ENCODE measurements at regions of chr2 and their contacts with region 1.

Region 1: DNA sequence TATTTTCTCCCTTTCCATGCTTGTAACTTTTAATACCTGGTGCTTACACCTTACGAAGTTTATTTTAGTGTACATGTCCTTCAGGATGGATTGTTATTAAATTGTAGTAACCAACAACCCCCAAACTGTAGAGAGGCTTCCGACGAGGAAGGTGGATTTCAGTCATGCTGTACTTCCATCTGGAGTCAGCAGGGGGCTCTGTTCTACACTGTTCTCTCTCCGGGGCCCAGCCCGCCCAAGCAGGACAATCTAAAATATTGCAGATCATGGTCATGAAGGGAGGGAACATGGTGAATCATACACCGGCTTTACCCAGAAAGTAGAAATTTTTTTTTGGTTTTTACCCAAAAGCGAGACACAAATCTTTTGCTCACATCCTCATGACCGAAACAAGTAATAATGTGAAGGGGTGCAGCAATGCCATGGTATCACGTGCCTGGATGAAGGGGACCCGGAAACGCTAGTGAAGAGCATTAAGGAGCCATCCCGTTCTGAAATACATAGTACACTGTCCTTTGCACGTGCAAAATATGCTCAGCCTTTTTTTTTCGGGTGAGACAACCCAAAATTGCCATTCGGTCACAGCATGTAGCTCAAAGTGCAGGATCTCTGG is 884.8 kb downstream of the EPHA4 start:
- DNase-seq: peak; percentile 60
- ATAC-seq: peak; percentile 87
- H3K4me3 ChIP-seq: no peak overlapping the region
- H3K27ac ChIP-seq: no peak overlapping the region
- H3K4me1 ChIP-seq: no peaks in the 10 kb centered on the region
- H3K27me3 ChIP-seq: no peaks in the 10 kb centered on the region
- CTCF ChIP-seq: peak; percentile 74
- POLR2A ChIP-seq: no peak
- RAD21 ChIP-seq: peak; percentile 83

Region 2: DNA sequence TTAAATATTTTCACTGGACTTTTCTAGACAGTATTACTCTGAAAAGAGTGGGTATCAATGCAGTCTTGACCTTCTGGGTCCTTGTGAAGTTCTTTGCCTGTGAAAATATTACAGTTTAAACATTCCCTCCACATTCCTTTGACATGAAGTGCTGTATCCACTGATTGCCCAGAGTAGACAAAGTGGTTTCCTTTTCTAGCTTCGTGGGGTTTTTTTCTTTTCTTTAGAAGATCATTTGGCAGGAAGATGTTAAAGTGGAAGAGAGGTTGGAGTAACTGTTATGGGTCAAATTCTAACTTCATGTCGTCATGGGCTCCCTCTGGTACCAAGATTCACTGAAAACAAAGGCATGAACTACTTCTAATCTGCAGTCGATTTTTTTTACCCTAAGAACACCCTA is 387.9 kb after region 1 on chr2:
- CTCF ChIA-PET with region 1: no interaction called
- POLR2A ChIA-PET with region 1: no interaction called
- dilution Hi-C with region 1: no loop called
- in situ Hi-C with region 1: no loop called
- intact Hi-C with region 1: loop called (anchors 10 kb)
- DNase-seq: peak; percentile 92
- ATAC-seq: peak; percentile 87
- H3K4me3 ChIP-seq: no peak overlapping the region
- H3K27ac ChIP-seq: peak overlapping the region; percentile 69; the same call in 1 of the 2 replicates
- H3K4me1 ChIP-seq: peaks cover 6% of the 10 kb centered on the region; the same call in 1 of the 2 replicates
- H3K27me3 ChIP-seq: no peaks in the 10 kb centered on the region
- CTCF ChIP-seq: no peak
- POLR2A ChIP-seq: no peak
- RAD21 ChIP-seq: no peak

Region 3: DNA sequence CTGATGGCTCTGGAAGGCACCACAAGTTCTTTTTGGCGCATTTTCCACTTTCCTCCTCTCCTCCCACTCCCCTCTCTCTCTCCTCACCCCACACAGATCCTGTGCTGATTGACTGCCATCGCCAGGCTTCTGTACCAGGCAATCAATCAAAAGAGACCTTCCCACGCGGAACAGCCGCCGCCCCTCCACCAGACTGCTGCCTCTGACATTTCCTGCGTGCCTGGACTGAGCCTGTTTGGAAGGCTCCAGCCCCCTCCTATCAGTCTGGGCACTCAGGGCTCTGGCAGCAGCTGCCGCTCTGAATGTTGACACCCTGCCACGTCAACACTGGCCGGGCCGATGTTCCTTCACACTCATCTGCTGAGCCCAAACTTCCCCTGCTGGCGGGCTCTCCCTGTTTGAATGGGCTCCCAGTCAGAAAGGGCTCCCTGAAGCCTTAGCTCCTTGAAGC is 417.0 kb after region 1 on chr2:
- CTCF ChIA-PET with region 1: no interaction called
- POLR2A ChIA-PET with region 1: no interaction called
- dilution Hi-C with region 1: no loop called
- in situ Hi-C with region 1: no loop called
- intact Hi-C with region 1: loop called (anchors 2 kb)
- DNase-seq: peak; percentile 64
- ATAC-seq: peak; percentile 85
- H3K4me3 ChIP-seq: no peak overlapping the region
- H3K27ac ChIP-seq: 0 out of 2 replicates have a peak overlapping the region, but pooled peaks have one; percentile 2
- H3K4me1 ChIP-seq: peaks cover 9% of the 10 kb centered on the region
- H3K27me3 ChIP-seq: no peaks in the 10 kb centered on the region; the same call in 1 of the 2 replicates
- CTCF ChIP-seq: 0 out of 2 replicates have a peak, but pooled peaks have one; percentile 12
- POLR2A ChIP-seq: no peak
- RAD21 ChIP-seq: no peak

Region 4: GRCh38 chr2:221429741-221430491 is 742.6 kb after region 1 on chr2:
- CTCF ChIA-PET with region 1: no interaction called
- POLR2A ChIA-PET with region 1: no interaction called
- dilution Hi-C with region 1: no loop called
- in situ Hi-C with region 1: no loop called
- intact Hi-C with region 1: loop called (anchors 10 kb)
- DNase-seq: peak; percentile 52
- ATAC-seq: no peak; the same call in 1 of the 2 replicates
- H3K4me3 ChIP-seq: no peak overlapping the region
- H3K27ac ChIP-seq: no peak overlapping the region
- H3K4me1 ChIP-seq: peaks cover 3% of the 10 kb centered on the region; the same call in 1 of the 2 replicates
- H3K27me3 ChIP-seq: no peaks in the 10 kb centered on the region
- CTCF ChIP-seq: no peak
- POLR2A ChIP-seq: no peak
- RAD21 ChIP-seq: no peak

Region 5: GRCh38 chr2:221969087-221969829 is 1281.9 kb after region 1 on chr2:
- CTCF ChIA-PET with region 1: no interaction called
- POLR2A ChIA-PET with region 1: no interaction called
- dilution Hi-C with region 1: no loop called
- in situ Hi-C with region 1: loop called (anchors 25 kb)
- intact Hi-C with region 1: no loop called
- DNase-seq: peak; percentile 55
- ATAC-seq: peak; percentile 96
- H3K4me3 ChIP-seq: no peak overlapping the region
- H3K27ac ChIP-seq: no peak overlapping the region
- H3K4me1 ChIP-seq: no peaks in the 10 kb centered on the region; the same call in 1 of the 2 replicates
- H3K27me3 ChIP-seq: peaks cover 4% of the 10 kb centered on the region
- CTCF ChIP-seq: peak; percentile 84
- POLR2A ChIP-seq: 0 out of 2 replicates have a peak, but pooled peaks have one; percentile 32
- RAD21 ChIP-seq: peak; percentile 84

Measured in IMR-90 (cell line).